ENCODE measurements at regions of chr14 and their contacts with region 1.

Region 1: DNA sequence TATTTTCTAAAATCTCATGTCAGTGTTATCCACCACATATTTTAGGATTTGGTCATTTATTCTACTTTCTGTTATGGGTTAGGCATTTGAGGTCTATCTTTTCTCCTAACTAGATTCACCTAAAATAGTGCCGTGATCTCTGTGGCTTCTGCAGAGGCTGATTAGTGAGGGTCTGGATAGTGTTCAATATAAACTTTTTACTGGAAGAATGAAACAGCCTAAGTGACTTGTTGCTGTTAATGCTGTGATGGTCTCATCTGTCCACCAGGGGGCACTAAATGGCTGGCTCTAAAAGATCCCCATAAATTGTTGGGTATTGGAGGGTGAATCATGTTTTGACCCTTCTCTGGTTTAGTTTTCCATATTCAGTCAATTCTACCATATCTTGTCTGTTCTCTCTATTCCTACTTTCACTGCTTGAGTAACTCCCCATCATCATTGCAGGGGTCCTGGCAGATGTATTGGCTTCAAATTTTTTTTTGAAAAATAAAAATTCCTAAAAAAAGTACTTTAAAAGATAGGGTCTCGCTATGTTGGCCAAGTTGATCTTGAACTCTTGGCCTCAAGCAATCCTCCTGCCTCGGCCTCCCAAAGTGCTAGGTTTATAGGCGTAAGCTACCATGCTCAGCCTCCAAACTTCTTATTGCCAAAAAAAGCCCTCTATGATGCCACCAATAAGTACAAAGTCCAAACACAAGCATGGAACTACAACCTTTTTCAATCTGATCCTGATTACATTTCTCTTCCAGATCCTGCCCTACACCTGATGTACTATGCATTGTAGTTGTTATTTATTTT is 6.9 kb downstream of the PABPN1 start:
- DNase-seq: peak; percentile 80
- ATAC-seq: peak; percentile 94
- H3K4me3 ChIP-seq: no peak overlapping the region
- H3K27ac ChIP-seq: no peak overlapping the region
- H3K4me1 ChIP-seq: peaks cover under 1% of the 10 kb centered on the region; the same call in 1 of the 2 replicates
- H3K27me3 ChIP-seq: no peaks in the 10 kb centered on the region; the same call in none of the 2 replicates
- CTCF ChIP-seq: peak; percentile 93
- POLR2A ChIP-seq: peak; percentile 38; the same call in 1 of the 2 replicates
- RAD21 ChIP-seq: peak; percentile 90

Region 2: DNA sequence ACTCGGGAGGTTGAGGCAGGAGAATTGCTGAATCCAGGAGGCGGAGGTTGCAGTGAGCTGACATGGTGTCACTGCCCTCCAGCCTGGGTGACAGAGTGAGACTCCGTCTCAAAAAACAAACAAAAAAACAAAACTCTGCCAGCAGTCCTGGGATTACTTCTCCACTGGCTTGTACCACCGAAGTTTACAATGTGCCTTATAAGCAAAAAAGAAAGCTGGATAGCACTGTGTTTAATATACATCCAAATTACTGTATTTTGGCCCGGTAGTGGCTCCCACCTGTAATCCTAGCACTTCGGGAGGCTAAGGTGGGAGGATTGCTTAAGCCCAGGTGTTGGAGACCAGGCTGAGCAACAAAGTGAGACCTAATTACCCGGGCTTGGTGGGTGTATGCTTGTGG is 59.0 kb before region 1 on chr14:
- CTCF ChIA-PET with region 1: no interaction called
- POLR2A ChIA-PET with region 1: no interaction called
- dilution Hi-C with region 1: no loop called
- in situ Hi-C with region 1: no loop called
- intact Hi-C with region 1: loop called (anchors 1 kb)
- DNase-seq: no peak
- ATAC-seq: no peak
- H3K4me3 ChIP-seq: no peak overlapping the region
- H3K27ac ChIP-seq: no peak overlapping the region
- H3K4me1 ChIP-seq: no peaks in the 10 kb centered on the region
- H3K27me3 ChIP-seq: no peaks in the 10 kb centered on the region
- CTCF ChIP-seq: no peak
- POLR2A ChIP-seq: no peak
- RAD21 ChIP-seq: no peak

Region 3: DNA sequence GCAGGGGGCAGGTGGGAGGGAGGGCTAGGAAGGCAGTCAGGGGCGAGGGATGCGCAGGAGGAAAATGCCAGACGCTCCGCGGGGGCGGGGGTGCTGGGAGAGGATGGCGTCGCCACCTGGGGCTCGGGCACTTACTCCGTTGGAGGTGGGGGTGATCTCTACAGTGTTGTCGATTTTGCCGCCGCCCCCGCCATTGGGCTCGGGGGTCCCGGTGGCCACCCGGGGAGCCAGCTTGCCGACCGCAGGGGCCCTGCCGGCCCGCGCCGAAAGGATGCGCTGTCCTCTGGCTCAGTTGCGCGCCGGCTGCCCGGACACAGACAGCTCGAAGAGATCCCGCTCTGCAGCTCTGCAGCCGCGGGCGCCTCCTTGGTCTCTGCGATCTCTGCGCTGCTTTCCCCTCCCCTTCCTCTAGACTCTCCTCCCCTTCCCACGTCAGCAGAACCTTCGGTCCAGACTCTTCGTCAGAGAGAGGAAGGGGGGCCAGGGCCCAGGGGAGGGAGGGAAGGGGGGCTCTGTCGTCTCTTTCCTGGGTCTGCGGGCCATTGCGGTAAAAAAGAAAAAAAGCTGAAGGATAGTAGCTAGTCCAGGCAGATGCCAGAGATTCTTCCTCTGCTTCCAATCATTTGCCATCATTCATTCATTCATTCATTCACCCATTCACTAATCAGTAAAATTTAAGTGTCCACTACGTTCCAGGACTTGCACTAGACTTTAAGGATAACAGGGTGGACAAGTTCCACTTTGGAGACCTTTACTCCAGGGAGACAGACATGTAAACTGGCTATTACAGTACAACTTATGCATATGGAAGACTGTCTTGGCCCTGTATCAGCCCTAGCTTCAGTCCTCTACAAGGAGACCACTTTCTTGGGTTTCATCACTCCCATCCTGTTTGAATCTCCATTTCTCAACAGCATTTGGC is 24.6 kb after region 1 on chr14 and contains the start of gene SLC22A17:
- CTCF ChIA-PET with region 1: no interaction called
- POLR2A ChIA-PET with region 1: no interaction called
- dilution Hi-C with region 1: no loop called
- in situ Hi-C with region 1: no loop called
- intact Hi-C with region 1: loop called (anchors 1 kb)
- DNase-seq: peak; percentile 92
- ATAC-seq: peak; percentile 98
- H3K4me3 ChIP-seq: peak within 1 kb of the TSS; percentile 76
- H3K27ac ChIP-seq: peak within 1 kb of the TSS; percentile 63
- H3K4me1 ChIP-seq: peaks cover 3% of the 10 kb centered on the region; the same call in 1 of the 2 replicates
- H3K27me3 ChIP-seq: no peaks in the 10 kb centered on the region
- CTCF ChIP-seq: peak; percentile 35
- POLR2A ChIP-seq: peak; percentile 88
- RAD21 ChIP-seq: peak; percentile 23
- total RNA-seq, gene SLC22A17: 6.4 and 6.6 TPM in 2 replicates

Region 4: GRCh38 chr14:23366426-23366921 is 38.3 kb after region 1 on chr14:
- CTCF ChIA-PET with region 1: no interaction called
- POLR2A ChIA-PET with region 1: interaction called, 3 read pairs
- dilution Hi-C with region 1: no loop called
- in situ Hi-C with region 1: loop called (anchors 10 kb)
- intact Hi-C with region 1: loop called (anchors 1 kb)
- DNase-seq: peak; percentile 62
- ATAC-seq: peak; percentile 69
- H3K4me3 ChIP-seq: peak overlapping the region; percentile 19
- H3K27ac ChIP-seq: peak overlapping the region; percentile 89
- H3K4me1 ChIP-seq: peaks cover 7% of the 10 kb centered on the region
- H3K27me3 ChIP-seq: peaks cover 19% of the 10 kb centered on the region; the same call in 1 of the 2 replicates
- CTCF ChIP-seq: no peak
- POLR2A ChIP-seq: no peak
- RAD21 ChIP-seq: no peak

Region 5: DNA sequence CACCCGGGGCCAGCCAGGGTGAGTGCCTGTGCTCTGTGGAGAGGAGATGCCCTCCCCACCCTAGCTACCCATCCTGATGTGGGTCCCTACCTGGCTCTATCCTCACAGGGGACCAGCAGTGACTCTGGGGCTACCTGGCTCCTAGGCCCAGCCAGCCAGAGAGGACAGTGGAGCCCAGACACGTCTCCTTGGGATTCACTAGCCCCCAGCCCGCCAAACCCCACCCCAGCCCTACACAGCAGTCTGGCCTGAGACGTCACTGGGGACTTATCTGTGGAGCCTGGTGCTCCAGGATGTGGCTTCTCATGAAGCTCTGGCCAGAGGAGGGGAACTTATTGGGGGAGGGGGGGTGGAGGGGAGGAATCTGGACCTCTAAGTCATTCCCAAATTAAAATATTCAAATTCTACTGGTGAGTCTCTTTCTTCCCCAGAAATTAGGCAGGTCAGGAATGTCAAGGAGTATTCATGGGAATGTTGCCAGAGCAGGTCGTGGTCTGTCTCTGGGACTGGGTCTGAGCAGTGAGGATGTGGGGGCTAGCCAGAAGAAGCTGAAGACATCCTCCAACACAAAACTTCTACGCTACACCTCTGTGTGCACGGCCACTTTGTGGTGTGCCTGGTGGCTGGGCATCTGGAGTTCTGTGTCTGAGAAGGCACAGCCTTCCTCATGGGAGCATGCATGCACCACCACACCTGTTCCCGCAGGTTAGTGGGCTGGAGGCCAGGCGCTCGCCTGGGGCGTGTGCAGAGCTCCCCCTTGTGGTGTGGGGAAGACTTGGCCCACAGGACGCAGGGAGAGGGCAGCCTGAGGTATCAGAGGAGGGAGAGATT is 51.4 kb after region 1 on chr14:
- CTCF ChIA-PET with region 1: interaction called, 12 read pairs
- POLR2A ChIA-PET with region 1: interaction called, 5 read pairs
- dilution Hi-C with region 1: no loop called
- in situ Hi-C with region 1: loop called (anchors 10 kb)
- intact Hi-C with region 1: loop called (anchors 1 kb)
- DNase-seq: peak; percentile 17
- ATAC-seq: peak; percentile 85
- H3K4me3 ChIP-seq: no peak overlapping the region
- H3K27ac ChIP-seq: no peak overlapping the region
- H3K4me1 ChIP-seq: no peaks in the 10 kb centered on the region
- H3K27me3 ChIP-seq: peaks cover 39% of the 10 kb centered on the region; the same call in 1 of the 2 replicates
- CTCF ChIP-seq: peak; percentile 93
- POLR2A ChIP-seq: no peak
- RAD21 ChIP-seq: peak; percentile 91

Region 6: GRCh38 chr14:23469127-23469905 is 141.2 kb after region 1 on chr14 and contains the start of gene NGDN:
- CTCF ChIA-PET with region 1: no interaction called
- POLR2A ChIA-PET with region 1: no interaction called
- dilution Hi-C with region 1: no loop called
- in situ Hi-C with region 1: no loop called
- intact Hi-C with region 1: loop called (anchors 1 kb)
- DNase-seq: peak; percentile 100
- ATAC-seq: peak; percentile 98
- H3K4me3 ChIP-seq: peak within 1 kb of the TSS; percentile 81
- H3K27ac ChIP-seq: peak within 1 kb of the TSS; percentile 69
- H3K4me1 ChIP-seq: no peaks in the 10 kb centered on the region
- H3K27me3 ChIP-seq: no peaks in the 10 kb centered on the region
- CTCF ChIP-seq: peak; percentile 83
- POLR2A ChIP-seq: peak; percentile 90
- RAD21 ChIP-seq: peak; percentile 51
- total RNA-seq, gene NGDN: 49.8 and 50.0 TPM in 2 replicates

Region 7: GRCh38 chr14:24556756-24557155 is 1228.6 kb after region 1 on chr14:
- CTCF ChIA-PET with region 1: no interaction called
- POLR2A ChIA-PET with region 1: no interaction called
- dilution Hi-C with region 1: no loop called
- in situ Hi-C with region 1: no loop called
- intact Hi-C with region 1: no loop called
- DNase-seq: peak; percentile 29
- ATAC-seq: no peak
- H3K4me3 ChIP-seq: no peak overlapping the region
- H3K27ac ChIP-seq: no peak overlapping the region
- H3K4me1 ChIP-seq: no peaks in the 10 kb centered on the region
- H3K27me3 ChIP-seq: no peaks in the 10 kb centered on the region
- CTCF ChIP-seq: no peak
- POLR2A ChIP-seq: no peak
- RAD21 ChIP-seq: no peak

Measured in IMR-90 (cell line).